Calu3 (cell line): ENCODE measurements at regions of chr12 and their contacts with region 1.

Region 1: DNA sequence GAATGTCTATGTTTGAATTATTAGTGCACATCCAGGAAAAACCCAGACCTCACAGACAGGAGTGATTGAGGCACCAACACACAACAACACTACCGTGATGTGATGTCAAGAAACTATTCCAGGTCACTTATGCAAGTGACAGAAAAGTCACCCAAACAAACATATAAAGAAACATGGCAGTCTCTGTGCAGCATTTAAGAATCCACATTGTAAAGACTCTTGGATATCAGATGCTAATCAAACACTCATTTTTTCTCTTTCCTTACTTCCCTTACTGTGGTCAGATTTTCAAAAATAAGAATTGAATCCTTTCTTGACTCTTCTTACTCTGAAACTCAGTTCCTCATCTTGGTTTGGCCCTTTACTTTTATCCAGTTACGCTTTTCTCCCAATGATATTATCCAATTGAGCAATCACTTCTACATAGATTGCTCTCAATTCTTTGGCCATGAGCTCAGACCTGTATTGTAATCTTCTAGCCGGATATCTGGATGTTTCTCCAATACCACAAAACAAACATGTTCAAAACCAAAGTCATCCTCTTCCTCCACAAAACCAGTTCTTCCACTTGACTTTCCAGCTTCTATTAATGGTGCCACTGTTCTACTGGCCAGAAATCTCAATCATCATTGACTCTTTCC is 115.4 kb downstream of the DUSP6 start:
- DNase-seq: peak; percentile 53
- H3K4me3 Mint-ChIP-seq: peak overlapping the region; percentile 30
- H3K27ac Mint-ChIP-seq: peak overlapping the region; percentile 86
- H3K4me1 Mint-ChIP-seq: peaks cover 49% of the 10 kb centered on the region
- H3K27me3 Mint-ChIP-seq: no peaks in the 10 kb centered on the region
- CTCF ChIP-seq: no peak

Region 2: GRCh38 chr12:89328246-89329030 is 91.6 kb after region 1 on chr12:
- CTCF ChIA-PET with region 1: no interaction called
- intact Hi-C with region 1: loop called (anchors 5 kb)
- DNase-seq: peak; percentile 58
- H3K4me3 Mint-ChIP-seq: no peak overlapping the region
- H3K27ac Mint-ChIP-seq: no peak overlapping the region
- H3K4me1 Mint-ChIP-seq: peaks cover 26% of the 10 kb centered on the region
- H3K27me3 Mint-ChIP-seq: no peaks in the 10 kb centered on the region
- CTCF ChIP-seq: no peak